Activated CD4-positive, alpha-beta T cell treated with anti-CD3 and anti-CD28 coated beads for 36 hours (primary cell): ENCODE measurements at regions of chr7 and their contacts with region 1.

Region 1: GRCh38 chr7:39948956-39949928 is 814 bp upstream of the CDK13 start:
- DNase-seq: peak; percentile 99
- ATAC-seq: peak; percentile 82
- H3K4me3 Mint-ChIP-seq: peak overlapping the region; percentile 93
- H3K27ac Mint-ChIP-seq: peak overlapping the region; percentile 98
- H3K4me1 Mint-ChIP-seq: peaks cover 25% of the 10 kb centered on the region
- H3K27me3 Mint-ChIP-seq: no peaks in the 10 kb centered on the region

Region 2: DNA sequence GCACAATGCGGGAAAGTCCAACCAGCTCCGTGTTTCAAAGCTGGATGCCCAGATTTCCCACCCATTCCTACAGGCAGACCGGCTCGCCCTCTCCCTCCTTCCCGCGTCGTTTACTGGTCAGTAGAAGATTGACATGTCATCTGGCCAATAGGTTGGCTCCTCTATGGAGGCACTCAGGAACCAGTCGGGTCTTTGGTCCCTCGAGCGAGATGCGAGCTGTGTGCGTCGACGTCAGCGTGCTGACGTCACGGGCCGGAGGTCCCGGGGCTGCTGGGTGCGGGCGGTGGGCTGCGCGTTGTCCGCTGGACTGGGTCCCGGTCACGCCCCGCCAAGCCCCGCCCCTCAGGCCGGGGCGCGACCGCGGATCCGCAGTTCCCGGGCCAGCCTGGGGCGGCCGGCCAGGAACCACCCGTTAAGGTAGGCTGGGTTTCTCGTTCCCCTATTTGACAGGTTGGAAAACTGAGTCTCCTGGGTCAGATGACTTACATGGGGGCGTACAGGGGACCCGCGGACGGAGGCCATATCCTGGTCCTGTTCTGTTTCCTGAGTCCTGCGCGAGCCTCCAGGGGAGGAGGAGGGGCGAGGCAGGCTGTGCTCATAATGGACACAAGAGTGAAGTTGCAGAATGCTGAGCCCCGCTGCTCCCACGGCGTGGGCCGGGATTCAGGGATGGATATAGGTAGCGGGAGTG is 1771.1 kb before region 1 on chr7 and contains the start of gene STARD3NL:
- CTCF ChIA-PET with region 1: no interaction called
- POLR2A ChIA-PET with region 1: no interaction called
- intact Hi-C with region 1: loop called in 1 of 2 experiments (anchors 10 kb)
- DNase-seq: peak; percentile 92
- ATAC-seq: peak; percentile 100
- H3K4me3 Mint-ChIP-seq: peak within 1 kb of the TSS; percentile 95
- H3K27ac Mint-ChIP-seq: peak within 1 kb of the TSS; percentile 93
- H3K4me1 Mint-ChIP-seq: peaks cover 37% of the 10 kb centered on the region
- H3K27me3 Mint-ChIP-seq: peaks cover 10% of the 10 kb centered on the region
- total RNA-seq, gene STARD3NL: 27.9 to 30.8 TPM

Region 3: DNA sequence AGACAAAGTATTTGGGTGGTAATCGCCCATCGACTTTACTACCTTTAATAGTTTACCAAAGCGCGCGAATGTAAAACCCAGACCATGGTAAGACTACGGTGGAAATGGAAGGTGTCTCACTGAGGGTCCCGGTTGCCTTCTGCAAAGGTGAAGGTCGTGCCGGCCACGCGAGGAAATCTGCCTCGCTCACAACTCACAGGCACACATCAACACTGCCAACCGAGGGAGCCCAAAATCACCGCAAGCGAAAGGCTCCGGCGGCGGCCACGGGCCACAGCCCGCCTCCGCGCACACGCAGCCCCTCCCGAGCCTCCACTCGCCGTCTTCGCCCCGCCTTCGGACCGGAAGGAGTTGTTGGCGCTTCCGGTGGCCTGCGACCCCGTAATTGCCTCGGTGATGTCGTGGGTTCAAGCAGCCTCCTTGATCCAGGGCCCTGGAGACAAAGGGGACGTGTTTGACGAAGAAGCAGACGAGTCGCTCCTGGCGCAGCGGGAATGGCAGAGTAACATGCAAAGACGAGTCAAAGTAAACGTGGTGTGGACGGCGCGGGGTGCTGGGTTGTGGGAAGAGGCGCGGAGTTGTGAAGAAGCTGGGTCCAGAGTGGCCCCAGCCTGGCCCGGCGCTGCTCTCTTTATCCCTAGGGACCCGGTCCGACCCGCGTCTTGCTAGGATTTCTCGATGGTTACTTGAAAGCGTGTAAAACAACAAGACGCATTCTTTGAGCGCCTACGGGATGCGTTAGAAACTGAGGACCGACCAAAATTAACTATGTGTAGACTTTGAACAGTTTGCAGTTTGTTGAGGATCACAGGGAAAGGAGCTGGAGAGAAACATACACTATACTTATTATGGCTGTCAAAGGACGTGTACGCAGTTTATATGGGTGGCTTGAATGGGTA is 383.0 kb before region 1 on chr7 and contains the start of gene YAE1:
- CTCF ChIA-PET with region 1: no interaction called
- POLR2A ChIA-PET with region 1: no interaction called
- intact Hi-C with region 1: loop called in 1 of 2 experiments (anchors 2 kb)
- DNase-seq: peak; percentile 89
- ATAC-seq: peak; percentile 95
- H3K4me3 Mint-ChIP-seq: peak within 1 kb of the TSS; percentile 96
- H3K27ac Mint-ChIP-seq: peak within 1 kb of the TSS; percentile 98
- H3K4me1 Mint-ChIP-seq: peaks cover 14% of the 10 kb centered on the region
- H3K27me3 Mint-ChIP-seq: no peaks in the 10 kb centered on the region
- total RNA-seq, gene YAE1: 9.8 to 13.5 TPM

Region 4: GRCh38 chr7:39623018-39623731 is 326.1 kb before region 1 on chr7 and contains the start of gene RALA:
- CTCF ChIA-PET with region 1: no interaction called
- POLR2A ChIA-PET with region 1: no interaction called
- intact Hi-C with region 1: loop called (anchors 1 to 2 kb)
- DNase-seq: peak; percentile 95
- ATAC-seq: peak; percentile 95
- H3K4me3 Mint-ChIP-seq: peak within 1 kb of the TSS; percentile 87
- H3K27ac Mint-ChIP-seq: peak within 1 kb of the TSS; percentile 91
- H3K4me1 Mint-ChIP-seq: peaks cover 43% of the 10 kb centered on the region
- H3K27me3 Mint-ChIP-seq: no peaks in the 10 kb centered on the region
- total RNA-seq, gene RALA: 30.7 to 33.7 TPM

Region 5: GRCh38 chr7:40057292-40057691 is 108.0 kb after region 1 on chr7:
- CTCF ChIA-PET with region 1: interaction called, 22 read pairs
- POLR2A ChIA-PET with region 1: no interaction called
- intact Hi-C with region 1: loop called (anchors 1 kb)
- DNase-seq: no peak
- ATAC-seq: no peak
- H3K4me3 Mint-ChIP-seq: no peak overlapping the region
- H3K27ac Mint-ChIP-seq: no peak overlapping the region
- H3K4me1 Mint-ChIP-seq: peaks cover 3% of the 10 kb centered on the region
- H3K27me3 Mint-ChIP-seq: no peaks in the 10 kb centered on the region

Region 6: GRCh38 chr7:40120020-40120419 is 170.8 kb after region 1 on chr7:
- CTCF ChIA-PET with region 1: no interaction called
- POLR2A ChIA-PET with region 1: no interaction called
- intact Hi-C with region 1: no loop called
- DNase-seq: no peak
- ATAC-seq: no peak
- H3K4me3 Mint-ChIP-seq: no peak overlapping the region
- H3K27ac Mint-ChIP-seq: no peak overlapping the region
- H3K4me1 Mint-ChIP-seq: no peaks in the 10 kb centered on the region
- H3K27me3 Mint-ChIP-seq: no peaks in the 10 kb centered on the region

Region 7: DNA sequence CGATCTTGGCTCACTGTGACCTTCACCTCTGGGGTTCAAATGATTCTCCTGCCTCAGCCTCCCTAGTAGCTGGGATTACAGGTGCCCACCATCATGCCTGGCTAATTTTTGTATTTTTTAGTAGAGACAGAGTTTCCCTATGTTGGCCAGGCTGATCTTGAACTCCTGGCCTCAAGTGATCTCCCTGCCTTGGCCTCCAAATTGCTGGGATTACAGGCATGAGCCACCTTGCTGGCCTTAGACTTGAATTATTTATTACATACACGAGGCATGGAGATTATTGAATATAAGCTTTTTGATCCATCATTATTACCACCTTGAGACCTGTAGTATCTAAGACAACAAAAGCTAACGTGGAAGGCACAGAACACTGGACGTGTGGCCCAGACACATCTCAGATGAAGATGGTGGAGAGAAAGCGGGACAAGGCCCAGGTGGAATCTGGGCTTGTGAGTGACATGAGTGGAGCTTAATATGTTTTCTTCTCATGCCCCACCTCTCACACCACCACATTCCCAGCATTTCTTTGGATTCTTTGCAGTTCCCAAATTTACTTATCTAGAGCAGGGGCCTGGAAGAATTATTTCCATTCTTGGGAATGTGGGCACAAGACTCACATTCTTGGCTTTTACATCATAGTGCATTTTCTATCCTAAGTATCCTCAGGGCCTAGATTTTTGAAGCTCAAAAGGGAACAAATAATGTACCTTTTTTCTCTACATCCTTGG is 262.2 kb after region 1 on chr7:
- CTCF ChIA-PET with region 1: no interaction called
- POLR2A ChIA-PET with region 1: no interaction called
- intact Hi-C with region 1: no loop called
- DNase-seq: no peak
- ATAC-seq: no peak
- H3K4me3 Mint-ChIP-seq: no peak overlapping the region
- H3K27ac Mint-ChIP-seq: no peak overlapping the region
- H3K4me1 Mint-ChIP-seq: no peaks in the 10 kb centered on the region
- H3K27me3 Mint-ChIP-seq: no peaks in the 10 kb centered on the region

Region 8: DNA sequence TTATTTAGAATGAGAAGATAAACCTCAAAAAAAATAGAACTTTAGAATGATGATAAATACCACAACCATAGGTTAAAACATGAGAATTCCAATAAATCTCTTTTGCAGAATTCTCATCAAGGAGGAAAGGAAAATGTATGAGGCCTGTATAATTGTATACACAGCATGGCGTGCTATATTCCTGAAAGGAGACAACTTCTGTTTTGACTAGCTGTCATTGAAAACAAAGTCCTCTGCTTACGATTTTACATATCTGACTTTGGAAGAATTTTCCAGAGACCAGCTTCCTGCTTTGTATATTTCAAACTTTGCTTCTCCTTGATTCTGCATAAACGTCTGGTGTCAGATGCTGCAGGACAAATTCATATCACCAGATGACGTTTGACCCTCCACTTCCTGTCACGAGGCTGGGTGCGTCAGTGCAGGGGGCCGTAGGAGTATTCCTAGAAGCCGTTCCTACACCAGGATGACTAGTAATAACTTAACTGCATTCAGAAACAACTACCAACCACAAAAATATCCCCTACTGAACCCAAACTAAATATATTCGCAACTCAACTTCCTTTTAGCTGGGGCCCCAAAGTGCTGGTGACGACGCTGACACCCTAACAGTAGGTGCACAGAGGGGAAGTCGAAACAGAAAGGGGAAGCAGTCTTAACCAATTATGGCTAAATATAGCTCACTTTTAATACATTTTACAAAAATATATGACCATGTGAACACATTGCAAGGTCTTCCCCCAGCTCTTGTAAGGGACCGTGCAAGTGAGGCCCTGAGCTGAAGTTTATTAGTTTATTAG is 1932.3 kb after region 1 on chr7:
- CTCF ChIA-PET with region 1: no interaction called
- POLR2A ChIA-PET with region 1: interaction called, 3 read pairs
- intact Hi-C with region 1: loop called in 1 of 2 experiments (anchors 5 kb)
- DNase-seq: peak; percentile 90
- ATAC-seq: peak; percentile 95
- H3K4me3 Mint-ChIP-seq: peak overlapping the region; percentile 30
- H3K27ac Mint-ChIP-seq: peak overlapping the region; percentile 93
- H3K4me1 Mint-ChIP-seq: peaks cover 49% of the 10 kb centered on the region
- H3K27me3 Mint-ChIP-seq: peaks cover 4% of the 10 kb centered on the region